SK-N-SH (cell line): ENCODE measurements at regions of chr7 and their contacts with region 1.

Region 1: GRCh38 chr7:23055582-23056178 is 41.8 kb upstream of the HYCC1 start:
- DNase-seq: peak; percentile 70
- H3K4me3 ChIP-seq: no peak overlapping the region; a peak in 1 of 4 replicates
- H3K27ac ChIP-seq: no peak overlapping the region
- H3K4me1 ChIP-seq: no peaks in the 10 kb centered on the region
- H3K27me3 ChIP-seq: no peaks in the 10 kb centered on the region; the same call in 1 of the 2 replicates
- CTCF ChIP-seq: peak; percentile 100
- EP300 ChIP-seq: no peak
- RAD21 ChIP-seq: peak; percentile 98

Region 2: DNA sequence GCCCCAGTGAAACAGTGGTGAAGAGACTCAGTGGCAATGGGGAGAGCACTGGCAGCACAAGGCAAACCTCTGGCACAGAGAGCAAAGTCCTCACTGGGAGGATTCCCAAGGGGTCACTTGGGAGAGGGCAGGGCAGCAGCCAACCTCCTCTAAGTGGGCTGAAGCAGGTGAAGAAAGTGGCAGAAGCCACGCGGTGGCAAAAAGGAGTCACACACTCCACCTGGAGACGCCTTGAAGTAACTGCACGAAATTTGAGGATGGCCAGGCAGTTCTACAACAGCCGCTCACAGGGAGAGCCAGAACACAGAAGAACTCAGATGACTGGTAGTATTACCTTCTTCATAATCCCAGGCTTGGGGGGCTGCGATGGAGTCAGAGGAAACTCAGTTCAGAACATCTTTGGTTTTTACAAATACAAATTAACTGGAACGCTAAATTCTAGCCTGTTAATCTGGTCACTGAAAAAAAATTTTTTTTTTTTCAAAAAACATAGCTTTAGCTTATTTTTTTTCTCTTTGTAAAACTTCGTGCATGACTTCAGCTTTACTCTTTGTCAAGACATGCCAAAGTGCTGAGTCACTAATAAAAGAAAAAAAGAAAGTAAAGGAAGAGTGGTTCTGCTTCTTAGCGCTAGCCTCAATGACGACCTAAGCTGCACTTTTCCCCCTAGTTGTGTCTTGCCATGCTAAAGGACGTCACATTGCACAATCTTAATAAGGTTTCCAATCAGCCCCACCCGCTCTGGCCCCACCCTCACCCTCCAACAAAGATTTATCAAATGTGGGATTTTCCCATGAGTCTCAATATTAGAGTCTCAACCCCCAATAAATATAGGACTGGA is 329.1 kb before region 1 on chr7:
- CTCF ChIA-PET with region 1: interaction called, 18 read pairs
- POLR2A ChIA-PET with region 1: no interaction called
- DNase-seq: peak; percentile 32
- H3K4me3 ChIP-seq: peak overlapping the region; percentile 40 to 55; a peak in 3 of 4 replicates
- H3K27ac ChIP-seq: peak overlapping the region; percentile 72 to 80; a peak in 3 of 4 replicates
- H3K4me1 ChIP-seq: peaks cover 9 to 14% of the 10 kb centered on the region in 2 experiments; a peak in 2 of 4 replicates
- H3K27me3 ChIP-seq: no peaks in the 10 kb centered on the region
- CTCF ChIP-seq: peak; percentile 66
- EP300 ChIP-seq: no peak; a peak in 1 of 4 replicates
- RAD21 ChIP-seq: peak; percentile 50

Region 3: DNA sequence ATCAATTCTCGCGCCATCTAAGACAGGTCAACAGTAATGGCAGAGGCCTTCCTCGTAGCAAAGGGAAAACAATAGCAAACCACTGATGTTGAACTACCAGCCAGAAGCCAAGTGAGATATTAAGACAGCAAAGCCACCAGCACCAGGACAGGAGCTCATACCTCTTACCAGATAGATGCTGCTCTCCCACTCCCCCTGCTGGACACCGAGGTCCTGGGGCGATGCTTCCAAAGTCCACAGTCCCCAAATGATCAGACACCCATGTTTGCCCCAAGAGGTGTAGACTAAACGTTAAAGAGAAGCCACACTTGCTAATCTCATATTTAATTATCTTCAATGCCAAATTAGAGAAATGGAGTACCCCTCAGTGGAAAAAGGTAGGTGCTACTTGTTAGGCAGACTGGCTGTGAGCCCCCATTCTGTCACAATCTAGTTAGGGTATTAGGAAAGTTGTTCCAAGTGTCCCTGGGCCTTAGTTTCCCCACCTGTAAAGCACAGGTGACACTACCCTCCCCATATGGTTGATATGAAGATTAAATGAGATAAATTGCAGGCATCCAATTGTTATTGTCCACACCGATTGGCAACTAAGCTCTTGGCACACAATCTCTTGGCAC is 273.0 kb before region 1 on chr7:
- CTCF ChIA-PET with region 1: interaction called, 22 read pairs
- POLR2A ChIA-PET with region 1: no interaction called
- DNase-seq: peak; percentile 76
- H3K4me3 ChIP-seq: no peak overlapping the region
- H3K27ac ChIP-seq: no peak overlapping the region
- H3K4me1 ChIP-seq: no peaks in the 10 kb centered on the region; a peak in 3 of 4 replicates
- H3K27me3 ChIP-seq: no peaks in the 10 kb centered on the region
- CTCF ChIP-seq: peak; percentile 92
- EP300 ChIP-seq: no peak
- RAD21 ChIP-seq: peak; percentile 62

Region 4: GRCh38 chr7:23020742-23021401 is 34.8 kb before region 1 on chr7:
- CTCF ChIA-PET with region 1: interaction called, 10 read pairs
- POLR2A ChIA-PET with region 1: no interaction called
- DNase-seq: no peak
- H3K4me3 ChIP-seq: no peak overlapping the region
- H3K27ac ChIP-seq: no peak overlapping the region
- H3K4me1 ChIP-seq: no peaks in the 10 kb centered on the region
- H3K27me3 ChIP-seq: peaks cover 22% of the 10 kb centered on the region
- CTCF ChIP-seq: no peak
- EP300 ChIP-seq: no peak
- RAD21 ChIP-seq: no peak

Region 5: GRCh38 chr7:23043441-23043840 is 12.2 kb before region 1 on chr7:
- CTCF ChIA-PET with region 1: interaction called, 29 read pairs
- POLR2A ChIA-PET with region 1: no interaction called
- DNase-seq: no peak
- H3K4me3 ChIP-seq: no peak overlapping the region
- H3K27ac ChIP-seq: no peak overlapping the region
- H3K4me1 ChIP-seq: no peaks in the 10 kb centered on the region
- H3K27me3 ChIP-seq: no peaks in the 10 kb centered on the region
- CTCF ChIP-seq: no peak
- EP300 ChIP-seq: no peak
- RAD21 ChIP-seq: no peak

Region 6: GRCh38 chr7:23072048-23072447 is 16.4 kb after region 1 on chr7:
- CTCF ChIA-PET with region 1: interaction called, 11 read pairs
- POLR2A ChIA-PET with region 1: no interaction called
- DNase-seq: no peak
- H3K4me3 ChIP-seq: no peak overlapping the region
- H3K27ac ChIP-seq: no peak overlapping the region
- H3K4me1 ChIP-seq: peaks cover 0 to 2% of the 10 kb centered on the region in 2 experiments; a peak in 1 of 4 replicates
- H3K27me3 ChIP-seq: peaks cover 7% of the 10 kb centered on the region; the same call in 1 of the 2 replicates
- CTCF ChIP-seq: peak; percentile 45
- EP300 ChIP-seq: no peak
- RAD21 ChIP-seq: 0 out of 2 replicates have a peak, but pooled peaks have one; percentile 14